ENCODE measurements at regions of chr5 and their contacts with region 1.

Region 1: GRCh38 chr5:57499262-57500050 is 16.8 kb upstream of the ACTBL2 start:
- DNase-seq: peak in 2 of 4 donors; percentile 35 to 60
- ATAC-seq: peak; percentile 51
- H3K4me3 ChIP-seq: no peak overlapping the region
- H3K27ac ChIP-seq: no peak overlapping the region
- H3K4me1 ChIP-seq: peaks cover 8 to 13% of the 10 kb centered on the region in 2 donors
- H3K27me3 ChIP-seq: no peaks in the 10 kb centered on the region
- CTCF ChIP-seq: peak; percentile 59 to 66

Region 2: DNA sequence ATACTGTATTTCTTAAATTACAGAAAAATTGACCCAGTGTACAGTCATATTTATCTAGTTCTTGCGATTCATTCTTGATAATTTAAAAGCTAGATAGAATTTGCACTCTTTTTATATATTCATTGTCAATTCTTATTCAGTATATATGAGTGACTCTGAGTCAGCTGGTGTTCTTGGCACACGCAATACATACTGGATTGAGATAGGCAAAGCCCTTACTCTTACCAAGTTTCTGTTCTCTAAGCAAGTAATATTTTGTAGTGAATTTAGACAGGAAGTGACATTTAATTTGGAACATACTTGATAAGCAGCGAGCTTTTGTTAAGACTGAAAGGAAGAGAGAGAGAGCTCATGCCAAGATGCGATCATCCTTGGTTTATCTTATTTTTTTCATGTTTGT is 267.8 kb before region 1 on chr5:
- intact Hi-C with region 1: no loop called
- DNase-seq: no peak
- ATAC-seq: no peak
- H3K4me3 ChIP-seq: no peak overlapping the region
- H3K27ac ChIP-seq: no peak overlapping the region
- H3K4me1 ChIP-seq: peaks cover 0 to 6% of the 10 kb centered on the region in 2 donors
- H3K27me3 ChIP-seq: no peaks in the 10 kb centered on the region
- CTCF ChIP-seq: no peak

Region 3: GRCh38 chr5:58466939-58467338 is 967.5 kb after region 1 on chr5:
- intact Hi-C with region 1: loop called in 1 of 2 experiments (anchors 5 kb)
- DNase-seq: no peak
- ATAC-seq: peak; percentile 66
- H3K4me3 ChIP-seq: no peak overlapping the region
- H3K27ac ChIP-seq: no peak overlapping the region
- H3K4me1 ChIP-seq: peaks cover 0 to 12% of the 10 kb centered on the region in 2 donors
- H3K27me3 ChIP-seq: no peaks in the 10 kb centered on the region
- CTCF ChIP-seq: no peak

Measured in left lung (tissue), 14 donors.